Calu3 (cell line): ENCODE measurements at regions of chr3 and their contacts with region 1.

Region 1: GRCh38 chr3:168865022-168865551 is 769.4 kb upstream of the GOLIM4 start:
- DNase-seq: peak; percentile 34
- H3K4me3 Mint-ChIP-seq: peak overlapping the region; percentile 49
- H3K27ac Mint-ChIP-seq: no peak overlapping the region
- H3K4me1 Mint-ChIP-seq: peaks cover 90% of the 10 kb centered on the region
- H3K27me3 Mint-ChIP-seq: no peaks in the 10 kb centered on the region
- CTCF ChIP-seq: peak; percentile 89

Region 2: GRCh38 chr3:168878655-168879054 is 13.6 kb after region 1 on chr3:
- CTCF ChIA-PET with region 1: interaction called, 16 read pairs
- intact Hi-C with region 1: no loop called
- DNase-seq: no peak
- H3K4me3 Mint-ChIP-seq: no peak overlapping the region
- H3K27ac Mint-ChIP-seq: no peak overlapping the region
- H3K4me1 Mint-ChIP-seq: peaks cover 71% of the 10 kb centered on the region
- H3K27me3 Mint-ChIP-seq: no peaks in the 10 kb centered on the region
- CTCF ChIP-seq: no peak

Region 3: DNA sequence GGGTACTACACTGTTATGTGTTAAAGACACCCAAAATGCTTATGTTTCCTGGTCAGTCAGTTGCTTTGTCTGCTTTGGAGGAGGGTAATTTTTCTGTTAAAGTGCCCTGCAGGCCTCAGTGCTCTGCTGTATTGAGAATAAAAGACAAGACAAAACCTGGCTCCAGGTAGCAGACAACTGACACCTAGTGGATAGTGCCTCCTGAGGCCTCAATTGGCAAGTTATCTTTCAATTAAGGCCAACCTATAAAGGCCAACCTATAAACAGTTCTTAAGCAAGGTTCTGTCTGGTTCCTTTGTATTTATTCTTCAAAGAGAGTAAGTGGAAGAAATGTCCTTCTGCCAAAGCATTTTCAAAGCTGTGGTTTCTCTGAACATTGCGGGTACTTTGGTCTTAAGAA is 24.6 kb after region 1 on chr3:
- CTCF ChIA-PET with region 1: interaction called, 5 read pairs
- intact Hi-C with region 1: loop called (anchors 1 kb)
- DNase-seq: peak; percentile 35
- H3K4me3 Mint-ChIP-seq: no peak overlapping the region
- H3K27ac Mint-ChIP-seq: no peak overlapping the region
- H3K4me1 Mint-ChIP-seq: peaks cover 14% of the 10 kb centered on the region
- H3K27me3 Mint-ChIP-seq: no peaks in the 10 kb centered on the region
- CTCF ChIP-seq: peak; percentile 55

Region 4: GRCh38 chr3:169133178-169134161 is 268.4 kb after region 1 on chr3:
- CTCF ChIA-PET with region 1: interaction called, 4 read pairs
- intact Hi-C with region 1: loop called (anchors 5 kb)
- DNase-seq: no peak
- H3K4me3 Mint-ChIP-seq: peak overlapping the region; percentile 33
- H3K27ac Mint-ChIP-seq: peak overlapping the region; percentile 75
- H3K4me1 Mint-ChIP-seq: peaks cover 75% of the 10 kb centered on the region
- H3K27me3 Mint-ChIP-seq: no peaks in the 10 kb centered on the region
- CTCF ChIP-seq: peak; percentile 63